A549 (cell line): ENCODE measurements at regions of chr9 and their contacts with region 1.

Region 1: GRCh38 chr9:72280913-72281500 is 84.0 kb downstream of the ZFAND5 start:
- DNase-seq: peak; percentile 63 to 77
- ATAC-seq: peak; percentile 94 to 98
- H3K4me3 ChIP-seq: no peak overlapping the region
- H3K27ac ChIP-seq: peak overlapping the region in 1 of 2 experiments; percentile 19; a peak in 3 of 6 replicates
- H3K4me1 ChIP-seq: no peaks in the 10 kb centered on the region
- CTCF ChIP-seq: peak; percentile 95
- EP300 ChIP-seq: no peak
- POLR2A ChIP-seq: no peak
- RAD21 ChIP-seq: peak; percentile 98

Region 2: DNA sequence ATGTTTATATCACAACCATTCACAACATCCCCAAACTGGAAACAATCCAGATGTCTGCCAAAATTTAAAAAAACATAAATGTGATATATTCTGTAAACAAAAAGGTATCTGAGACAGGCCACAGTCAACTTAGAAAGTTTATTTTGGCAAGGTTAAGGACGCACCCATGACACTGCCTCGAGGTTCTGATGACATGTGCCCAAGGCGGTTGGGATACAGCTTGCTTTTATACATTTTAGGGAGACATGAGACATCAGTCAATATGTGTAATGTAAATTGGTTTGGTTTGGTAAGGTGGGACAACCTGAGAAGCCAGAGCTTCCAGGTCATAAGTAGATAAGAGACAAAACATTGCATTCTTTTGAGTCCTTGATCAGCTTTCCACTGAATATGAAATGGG is 271.2 kb before region 1 on chr9:
- CTCF ChIA-PET with region 1: no interaction called
- POLR2A ChIA-PET with region 1: no interaction called
- DNase-seq: no peak
- ATAC-seq: no peak
- H3K4me3 ChIP-seq: no peak overlapping the region
- H3K27ac ChIP-seq: no peak overlapping the region
- H3K4me1 ChIP-seq: peaks cover 8% of the 10 kb centered on the region; the same call in 1 of the 3 replicates
- CTCF ChIP-seq: no peak
- EP300 ChIP-seq: no peak
- POLR2A ChIP-seq: no peak
- RAD21 ChIP-seq: no peak

Region 3: DNA sequence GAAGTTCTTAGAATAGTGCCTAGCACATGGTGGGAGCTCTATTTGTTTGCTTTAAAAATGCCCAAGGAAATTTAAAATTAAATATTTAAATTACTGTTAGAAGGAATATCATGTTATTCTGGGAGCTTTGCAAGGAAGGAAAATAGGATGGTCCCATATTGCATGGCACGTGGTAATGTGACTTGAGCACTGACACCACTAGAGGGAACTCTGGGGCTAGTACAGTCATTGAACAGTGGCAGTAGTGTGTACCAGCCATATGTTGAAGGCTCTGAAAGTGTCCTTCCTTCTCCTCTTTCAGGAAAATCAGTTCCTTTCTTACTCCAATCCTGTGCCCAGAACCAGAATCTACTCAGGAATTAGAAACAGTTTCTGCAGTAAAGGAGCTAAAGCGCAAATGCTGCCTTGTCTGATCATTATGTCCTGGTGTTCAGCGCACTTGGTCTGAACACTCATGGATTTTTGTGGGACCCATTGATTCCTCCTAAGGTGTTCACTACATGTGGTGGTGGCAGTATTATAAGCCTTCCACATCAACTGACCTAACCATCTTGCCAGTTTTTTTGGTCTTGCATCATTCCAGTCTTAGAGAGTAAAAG is 77.7 kb before region 1 on chr9:
- CTCF ChIA-PET with region 1: interaction called, 10 read pairs
- POLR2A ChIA-PET with region 1: no interaction called
- DNase-seq: peak; percentile 64 to 70
- ATAC-seq: peak; percentile 98 to 99
- H3K4me3 ChIP-seq: no peak overlapping the region
- H3K27ac ChIP-seq: no peak overlapping the region
- H3K4me1 ChIP-seq: peaks cover 6% of the 10 kb centered on the region; the same call in 2 of the 3 replicates
- CTCF ChIP-seq: peak; percentile 73
- EP300 ChIP-seq: no peak
- POLR2A ChIP-seq: no peak
- RAD21 ChIP-seq: peak; percentile 73 to 81

Region 4: GRCh38 chr9:72592502-72593403 is 311.7 kb after region 1 on chr9:
- CTCF ChIA-PET with region 1: interaction called, 22 read pairs
- POLR2A ChIA-PET with region 1: no interaction called
- DNase-seq: peak; percentile 38 to 78
- ATAC-seq: peak; percentile 81 to 88
- H3K4me3 ChIP-seq: no peak overlapping the region
- H3K27ac ChIP-seq: peak overlapping the region; percentile 67 to 82
- H3K4me1 ChIP-seq: peaks cover 26% of the 10 kb centered on the region
- CTCF ChIP-seq: peak; percentile 92
- EP300 ChIP-seq: no peak
- POLR2A ChIP-seq: no peak
- RAD21 ChIP-seq: peak; percentile 90 to 91

Region 5: GRCh38 chr9:72623156-72623555 is 342.1 kb after region 1 on chr9:
- CTCF ChIA-PET with region 1: interaction called, 14 read pairs
- POLR2A ChIA-PET with region 1: no interaction called
- DNase-seq: no peak
- ATAC-seq: no peak
- H3K4me3 ChIP-seq: no peak overlapping the region
- H3K27ac ChIP-seq: no peak overlapping the region
- H3K4me1 ChIP-seq: no peaks in the 10 kb centered on the region
- CTCF ChIP-seq: no peak
- EP300 ChIP-seq: no peak
- POLR2A ChIP-seq: no peak
- RAD21 ChIP-seq: no peak

Region 6: DNA sequence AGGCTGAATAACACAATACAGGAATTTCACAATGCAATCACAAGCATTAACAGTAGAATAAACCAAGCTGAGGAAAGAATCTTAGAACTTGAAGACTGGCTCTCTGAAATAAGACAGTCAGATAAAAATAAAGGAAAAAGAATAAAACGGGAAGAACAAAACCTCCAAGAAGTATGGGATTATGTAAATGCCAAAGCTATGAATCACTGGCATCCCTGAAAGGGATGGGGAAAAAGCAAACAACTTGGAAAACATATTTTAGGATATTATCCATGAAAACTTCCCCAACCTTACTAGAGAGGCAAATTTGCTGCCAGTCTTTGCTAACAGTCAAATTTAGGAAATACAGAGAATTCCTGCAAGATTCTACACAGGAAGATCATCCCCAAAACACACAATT is 513.9 kb after region 1 on chr9:
- CTCF ChIA-PET with region 1: interaction called, 10 read pairs
- POLR2A ChIA-PET with region 1: no interaction called
- DNase-seq: peak in 1 of 2 experiments; percentile 28
- ATAC-seq: 0 out of 6 replicates have a peak, but pooled peaks of 1 of the 2 experiments have one; percentile 34
- H3K4me3 ChIP-seq: no peak overlapping the region
- H3K27ac ChIP-seq: peak overlapping the region; percentile 0 to 12; a peak in 2 of 6 replicates
- H3K4me1 ChIP-seq: peaks cover 13% of the 10 kb centered on the region
- CTCF ChIP-seq: no peak
- EP300 ChIP-seq: no peak
- POLR2A ChIP-seq: no peak
- RAD21 ChIP-seq: no peak

Region 7: DNA sequence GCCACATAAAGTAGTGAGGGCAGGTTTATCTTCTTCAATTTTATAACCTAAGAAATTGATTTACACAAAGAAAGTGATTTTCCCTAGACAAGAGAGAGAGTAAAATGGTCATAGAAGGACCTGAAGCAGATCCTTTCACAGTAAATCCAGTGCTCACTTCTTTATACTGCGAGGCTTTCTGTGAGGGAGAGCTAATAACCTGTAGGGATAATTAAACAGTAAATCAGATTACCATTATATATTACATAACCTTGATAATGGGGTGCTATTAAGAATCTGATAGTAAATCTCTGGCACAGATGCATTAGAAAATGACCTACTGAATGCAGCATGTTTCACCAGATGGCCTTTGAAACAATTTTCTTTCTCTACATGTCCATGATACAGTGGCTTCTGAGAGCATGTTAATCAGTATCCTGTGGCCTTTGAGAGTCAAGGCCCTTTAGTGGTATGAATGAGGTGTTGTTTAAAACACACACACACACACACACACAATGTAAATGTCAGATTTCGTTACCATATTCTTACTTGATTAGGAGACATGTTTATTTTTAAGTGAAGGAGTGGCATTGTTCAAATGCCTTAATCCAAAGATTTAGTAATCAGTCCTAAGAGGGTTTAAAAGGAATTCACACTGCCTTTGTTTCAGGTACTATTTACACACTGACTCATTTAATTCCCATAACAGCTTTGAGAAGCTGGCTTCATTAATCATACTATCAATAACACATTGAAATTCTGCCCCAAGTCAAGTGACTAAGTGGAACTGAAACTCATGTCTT is 547.1 kb after region 1 on chr9:
- CTCF ChIA-PET with region 1: interaction called, 340 read pairs
- POLR2A ChIA-PET with region 1: no interaction called
- DNase-seq: peak; percentile 44 to 86
- ATAC-seq: peak; percentile 82 to 84
- H3K4me3 ChIP-seq: no peak overlapping the region
- H3K27ac ChIP-seq: peak overlapping the region; percentile 77 to 87
- H3K4me1 ChIP-seq: peaks cover 47% of the 10 kb centered on the region
- CTCF ChIP-seq: no peak
- EP300 ChIP-seq: peak; percentile 70 to 84; a peak in 3 of 5 replicates
- POLR2A ChIP-seq: no peak
- RAD21 ChIP-seq: peak in 1 of 2 experiments; percentile 14; a peak in 1 of 5 replicates